ENCODE measurements at regions of chr5 and their contacts with region 1.

Region 1: DNA sequence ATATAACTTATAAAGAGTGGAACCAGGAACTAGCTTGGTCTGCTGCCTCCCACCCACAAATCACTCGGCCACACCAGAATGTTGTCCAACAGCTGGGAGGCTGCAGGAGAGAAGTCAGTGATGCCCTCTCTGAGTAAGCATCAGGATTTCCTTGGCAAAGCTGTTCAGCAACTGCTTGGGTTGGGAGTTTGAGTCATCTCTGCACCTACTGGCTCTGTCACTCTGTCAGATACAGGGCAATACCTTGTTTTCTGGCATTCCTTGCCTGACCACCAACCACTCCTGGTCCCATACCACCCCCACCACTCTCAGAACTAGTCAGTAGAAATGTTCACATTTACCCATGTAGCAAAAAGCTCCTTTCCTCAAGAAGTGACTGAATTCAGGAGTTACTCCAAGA is 36.8 kb upstream of the GCNT4 start:
- DNase-seq: peak in 1 of 9 donors; percentile 22
- ATAC-seq: no peak
- H3K4me3 ChIP-seq: no peak overlapping the region
- H3K4me3 Mint-ChIP-seq: peak overlapping the region in 1 of 10 donors; percentile 4
- H3K27ac ChIP-seq: no peak overlapping the region
- H3K27ac Mint-ChIP-seq: peak overlapping the region in 3 of 9 donors; percentile 4 to 52 (median 12)
- H3K4me1 ChIP-seq: peaks cover 0 to 5% of the 10 kb centered on the region in 2 donors
- H3K4me1 Mint-ChIP-seq: peaks cover 0 to 33% (median 9%) of the 10 kb centered on the region in 7 donors
- H3K27me3 ChIP-seq: no peaks in the 10 kb centered on the region
- H3K27me3 Mint-ChIP-seq: peaks cover 0 to 4% (median 0%) of the 10 kb centered on the region in 5 donors

Region 2: DNA sequence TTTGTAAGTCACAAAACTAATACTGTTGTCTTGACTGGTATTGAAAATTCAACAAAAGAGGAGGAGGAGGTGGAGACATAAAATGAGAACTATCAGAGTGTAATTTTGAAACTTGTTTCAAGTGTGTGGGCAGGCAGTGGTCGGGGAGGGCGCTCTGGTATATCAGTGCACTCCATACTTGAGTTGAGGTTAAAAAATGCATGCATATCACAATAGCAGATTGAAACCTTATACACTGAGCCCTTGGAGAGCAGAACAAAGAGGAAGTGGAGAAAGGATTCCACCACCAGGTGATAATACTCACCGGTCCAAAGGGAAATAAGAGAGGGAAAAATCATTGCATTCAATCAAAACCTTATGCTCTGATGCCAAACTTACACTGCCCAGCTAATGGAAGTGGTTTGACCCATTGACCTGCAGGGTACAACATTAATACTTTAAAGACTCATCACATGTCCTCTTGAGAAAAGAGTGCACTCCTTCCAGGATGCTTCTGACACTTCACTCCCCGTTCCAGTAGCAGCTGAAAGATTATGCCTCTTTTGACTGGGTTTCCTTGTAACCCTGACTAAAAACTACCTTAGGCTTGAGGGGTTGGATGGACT is 143.5 kb before region 1 on chr5:
- CTCF ChIA-PET with region 1: no interaction called
- POLR2A ChIA-PET with region 1: no interaction called
- intact Hi-C with region 1: no loop called
- DNase-seq: peak in 1 of 9 donors; percentile 33
- ATAC-seq: no peak
- H3K4me3 ChIP-seq: no peak overlapping the region
- H3K4me3 Mint-ChIP-seq: peak overlapping the region in 1 of 10 donors; percentile 49
- H3K27ac ChIP-seq: no peak overlapping the region
- H3K27ac Mint-ChIP-seq: no peak overlapping the region
- H3K4me1 ChIP-seq: no peaks in the 10 kb centered on the region
- H3K4me1 Mint-ChIP-seq: peaks cover 0 to 9% (median 4%) of the 10 kb centered on the region in 7 donors
- H3K27me3 ChIP-seq: no peaks in the 10 kb centered on the region
- H3K27me3 Mint-ChIP-seq: peaks cover 0 to 45% (median 3%) of the 10 kb centered on the region in 5 donors

Region 3: DNA sequence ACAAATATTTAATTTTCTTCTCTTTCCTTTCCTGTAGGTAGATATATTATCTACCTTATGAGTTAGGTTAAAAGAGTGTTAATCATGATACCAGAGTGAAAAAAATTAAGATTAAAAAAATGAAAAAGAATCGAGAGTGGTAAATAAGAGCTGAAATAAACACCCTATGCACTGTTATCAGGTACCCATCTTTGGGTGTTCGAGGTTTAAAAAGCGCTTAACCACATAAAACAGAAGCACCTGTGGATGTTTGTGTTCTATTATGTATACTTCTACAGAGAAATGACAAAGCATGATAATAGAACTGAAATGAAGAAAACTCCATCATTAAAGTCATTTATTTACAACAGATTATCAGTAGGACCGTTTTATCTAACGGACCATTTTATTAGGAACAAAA is 11.1 kb before region 1 on chr5:
- CTCF ChIA-PET with region 1: interaction called, 8 read pairs
- POLR2A ChIA-PET with region 1: interaction called, 3 read pairs
- intact Hi-C with region 1: loop called in 1 of 2 experiments (anchors 1 kb)
- DNase-seq: peak in 6 of 9 donors; percentile 39 to 78 (median 60)
- ATAC-seq: peak; percentile 87
- H3K4me3 ChIP-seq: no peak overlapping the region
- H3K4me3 Mint-ChIP-seq: peak overlapping the region in 7 of 10 donors; percentile 9 to 52 (median 29)
- H3K27ac ChIP-seq: no peak overlapping the region
- H3K27ac Mint-ChIP-seq: peak overlapping the region in 3 of 9 donors; percentile 67 to 78 (median 76)
- H3K4me1 ChIP-seq: peaks cover 3 to 12% of the 10 kb centered on the region in 2 donors
- H3K4me1 Mint-ChIP-seq: peaks cover 3 to 49% (median 34%) of the 10 kb centered on the region in 7 donors
- H3K27me3 ChIP-seq: no peaks in the 10 kb centered on the region
- H3K27me3 Mint-ChIP-seq: peaks cover 0 to 5% (median 0%) of the 10 kb centered on the region in 5 donors